Ascending aorta (tissue), 2 donors: ENCODE measurements at regions of chr10 and their contacts with region 1.

Region 1: DNA sequence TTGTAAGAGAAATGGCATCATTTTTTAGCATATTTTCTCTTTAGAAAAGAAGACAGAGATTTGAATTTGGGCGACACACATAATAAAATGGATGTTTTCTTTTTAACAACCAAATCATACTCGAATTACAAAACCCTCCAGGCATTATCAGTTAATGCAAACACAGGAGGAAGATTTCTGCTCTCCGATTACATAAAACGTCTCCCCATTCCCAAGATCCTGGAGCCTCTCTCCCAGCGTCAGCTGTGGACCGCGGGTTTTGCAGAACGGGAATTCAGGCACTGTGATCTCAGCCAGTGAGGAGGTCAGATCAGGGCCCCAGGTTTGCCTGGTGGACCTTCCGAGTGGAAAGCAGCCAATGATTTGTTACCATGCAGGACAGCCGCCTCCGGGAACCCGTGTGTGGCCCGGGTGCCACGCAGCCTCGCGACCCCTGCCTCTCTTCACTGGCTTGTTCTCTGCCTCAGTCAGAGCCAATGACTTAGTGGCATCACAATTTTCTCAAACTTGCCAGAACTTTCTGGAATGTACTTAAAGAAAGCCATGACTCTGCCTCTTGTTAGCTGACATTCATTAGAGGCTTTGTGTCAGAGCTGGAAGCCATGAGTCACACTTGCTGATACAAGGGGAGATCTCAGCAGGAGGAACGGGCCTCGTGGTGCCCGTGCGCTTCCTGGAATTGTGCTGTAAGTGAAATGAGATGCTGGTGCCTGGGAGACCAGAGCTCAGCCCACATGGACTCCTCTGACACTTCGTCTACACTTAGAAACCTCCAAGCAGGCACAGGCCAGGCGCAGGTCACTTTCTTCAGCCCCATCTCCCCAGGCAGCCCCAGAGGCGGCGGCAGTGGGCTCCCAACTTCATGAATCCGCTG is 246.1 kb downstream of the KLF6 start:
- DNase-seq: peak; percentile 59 to 92
- H3K4me3 ChIP-seq: peak overlapping the region in 1 of 2 donors; percentile 50
- H3K27ac ChIP-seq: peak overlapping the region; percentile 35 to 61
- H3K4me1 ChIP-seq: peaks cover 0 to 20% of the 10 kb centered on the region in 2 donors
- H3K27me3 ChIP-seq: no peaks in the 10 kb centered on the region
- CTCF ChIP-seq: no peak

Region 2: GRCh38 chr10:3248888-3249758 is 289.8 kb before region 1 on chr10:
- intact Hi-C with region 1: loop called (anchors 5 kb)
- DNase-seq: peak in 1 of 2 donors; percentile 81
- H3K4me3 ChIP-seq: peak overlapping the region; percentile 6
- H3K27ac ChIP-seq: peak overlapping the region; percentile 76 to 81
- H3K4me1 ChIP-seq: peaks cover 0 to 14% of the 10 kb centered on the region in 2 donors
- H3K27me3 ChIP-seq: no peaks in the 10 kb centered on the region
- CTCF ChIP-seq: no peak

Region 3: DNA sequence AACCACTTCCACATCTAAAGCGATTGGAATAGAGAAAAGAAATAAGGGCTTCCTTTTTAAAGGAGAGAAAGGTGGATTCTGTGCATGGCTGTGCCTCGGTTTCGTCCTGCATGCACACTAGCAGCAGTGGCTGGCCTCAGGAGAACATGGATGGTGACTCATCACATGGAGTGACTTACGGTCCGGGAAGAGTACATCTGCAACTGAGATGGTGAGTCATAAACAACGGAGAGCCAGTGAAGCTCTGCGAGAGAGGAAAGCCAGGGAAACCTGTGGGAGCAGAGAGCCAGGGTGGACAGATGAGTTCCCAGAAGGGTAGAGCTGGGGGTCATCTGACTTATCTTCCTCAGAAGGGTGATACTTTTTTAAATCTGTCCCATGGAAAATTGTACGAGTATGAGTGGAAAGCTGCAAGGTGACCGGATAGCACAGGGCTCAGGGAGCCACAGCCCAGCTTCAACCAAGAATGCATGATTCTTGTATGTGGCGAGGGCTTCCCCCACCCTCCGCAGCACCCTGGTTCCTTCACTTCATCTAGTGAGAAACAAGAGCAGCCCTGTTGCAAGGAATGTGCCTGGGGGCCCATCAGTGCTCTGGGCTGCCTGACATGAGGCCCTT is 13.0 kb before region 1 on chr10:
- intact Hi-C with region 1: loop called (anchors 2 kb)
- DNase-seq: peak; percentile 39 to 81
- H3K4me3 ChIP-seq: no peak overlapping the region
- H3K27ac ChIP-seq: peak overlapping the region; percentile 38 to 63
- H3K4me1 ChIP-seq: peaks cover 0 to 21% of the 10 kb centered on the region in 2 donors
- H3K27me3 ChIP-seq: no peaks in the 10 kb centered on the region
- CTCF ChIP-seq: no peak

Region 4: DNA sequence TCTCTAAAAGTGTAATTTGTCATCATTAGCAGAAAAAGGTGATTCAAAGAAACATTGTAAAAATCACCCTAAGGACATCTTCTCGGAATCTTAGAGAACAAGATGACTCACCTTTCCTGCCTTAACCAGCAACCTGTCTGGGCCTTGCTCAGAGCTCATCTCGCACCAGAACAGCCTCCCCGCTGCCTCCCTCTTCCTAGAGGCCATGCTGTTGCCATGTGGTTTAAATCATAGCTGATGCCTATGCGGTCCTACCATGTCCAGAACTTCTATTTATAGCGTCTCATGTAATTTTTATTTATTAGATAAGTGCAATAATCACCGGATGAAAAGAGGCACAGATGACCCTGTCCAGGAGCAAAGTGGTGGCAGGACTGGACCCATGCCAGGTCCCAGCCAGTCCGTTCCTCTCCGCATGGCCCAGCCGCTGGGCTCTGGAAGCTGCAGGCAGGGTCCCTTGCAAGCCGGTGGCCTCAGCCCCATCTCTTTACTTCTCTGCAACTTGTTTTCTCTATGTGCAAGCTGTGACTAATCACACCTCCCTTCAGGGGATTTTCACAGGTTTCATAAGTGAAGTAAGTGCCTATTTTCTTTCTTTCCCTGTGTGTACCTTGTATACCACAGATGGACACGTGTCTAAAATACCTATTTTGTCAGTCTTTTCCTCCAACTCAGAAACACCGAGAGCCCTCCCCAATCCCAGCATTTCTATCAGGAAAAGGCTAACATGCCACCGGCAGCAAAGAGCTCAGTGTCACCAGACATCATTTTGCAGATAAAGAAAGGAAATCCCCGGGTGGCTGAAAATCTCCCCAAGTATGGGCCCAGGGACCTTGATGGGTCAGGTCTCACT is 219.0 kb after region 1 on chr10:
- intact Hi-C with region 1: loop called (anchors 5 kb)
- DNase-seq: peak in 1 of 2 donors; percentile 61
- H3K4me3 ChIP-seq: no peak overlapping the region
- H3K27ac ChIP-seq: no peak overlapping the region
- H3K4me1 ChIP-seq: peaks cover 5 to 21% of the 10 kb centered on the region in 2 donors
- H3K27me3 ChIP-seq: no peaks in the 10 kb centered on the region
- CTCF ChIP-seq: no peak